Common myeloid progenitor, CD34-positive (primary cell): ENCODE measurements at regions of chr4 and their contacts with region 1.

Region 1: DNA sequence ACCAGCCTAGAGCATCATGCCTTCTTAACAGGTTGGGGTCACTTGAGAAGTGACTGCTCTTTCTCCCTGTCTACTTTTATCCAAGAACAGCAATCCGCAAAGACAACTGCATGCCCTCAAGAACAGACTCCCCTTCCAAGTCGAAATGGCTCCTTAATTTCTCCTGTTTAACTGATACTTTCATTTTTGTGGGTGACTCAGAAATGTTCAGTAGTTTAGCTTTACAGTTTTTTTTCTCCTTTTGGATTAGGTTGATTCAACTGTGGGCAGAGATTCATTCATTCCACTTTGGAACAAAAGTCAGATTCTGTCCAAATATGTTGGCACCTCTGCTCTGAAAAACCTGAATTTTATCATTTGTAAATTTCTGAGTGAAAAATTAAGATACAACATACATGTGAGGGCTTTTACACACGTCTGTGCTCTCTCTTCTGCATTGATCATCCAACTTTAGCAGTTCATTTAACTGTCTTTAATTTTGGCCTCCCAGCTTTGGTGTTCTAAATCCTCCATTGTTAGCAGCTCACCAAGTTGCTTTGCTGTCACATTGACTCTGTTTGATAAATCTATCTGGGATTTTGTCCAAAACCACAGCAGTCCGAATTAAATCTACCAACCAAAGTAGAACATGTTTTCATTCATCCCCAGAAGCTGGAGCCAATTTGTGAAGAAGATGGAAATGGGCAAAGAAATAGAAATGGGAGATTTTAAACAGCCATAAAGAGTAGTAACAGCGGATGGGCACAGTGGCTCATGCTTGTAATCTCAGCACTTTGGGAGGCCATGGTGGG is 50.0 kb downstream of the HOPX start:
- DNase-seq: no peak
- H3K4me3 ChIP-seq: no peak overlapping the region
- H3K27ac ChIP-seq: no peak overlapping the region
- H3K4me1 ChIP-seq: peaks cover 0 to 14% (median 1%) of the 10 kb centered on the region in 4 experiments
- H3K27me3 ChIP-seq: no peaks in the 10 kb centered on the region

Region 2: DNA sequence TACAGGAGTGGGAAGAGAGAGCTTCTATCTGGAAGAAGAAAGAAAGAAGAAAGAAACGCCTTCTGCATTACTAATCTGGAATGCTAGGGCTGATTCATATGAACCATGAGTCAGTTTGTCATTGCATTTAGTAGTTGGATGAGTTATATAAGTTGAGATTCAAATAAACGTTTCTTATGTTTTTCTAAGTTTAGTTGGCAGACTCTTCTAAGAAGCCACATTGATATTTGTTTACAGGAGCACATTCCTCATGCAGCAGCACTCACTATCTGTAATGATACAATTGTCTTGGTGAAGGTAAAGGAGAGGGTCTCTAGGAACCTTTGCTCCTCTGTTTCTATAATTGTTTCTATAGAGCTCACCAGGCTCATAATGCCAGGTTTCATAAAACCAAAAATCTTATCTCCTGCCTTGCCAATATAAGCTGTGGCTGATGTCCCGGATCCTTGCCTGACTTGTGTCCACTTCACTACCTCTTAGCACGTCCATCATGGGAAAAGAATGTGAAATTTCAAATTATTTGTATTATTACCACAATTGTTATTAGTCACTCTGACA is 10.5 kb after region 1 on chr4:
- CTCF ChIA-PET with region 1: interaction called, 10 read pairs
- POLR2A ChIA-PET with region 1: no interaction called
- DNase-seq: no peak
- H3K4me3 ChIP-seq: no peak overlapping the region
- H3K27ac ChIP-seq: no peak overlapping the region
- H3K4me1 ChIP-seq: no peaks in the 10 kb centered on the region
- H3K27me3 ChIP-seq: no peaks in the 10 kb centered on the region

Region 3: GRCh38 chr4:56662782-56663468 is 31.9 kb after region 1 on chr4:
- CTCF ChIA-PET with region 1: no interaction called
- POLR2A ChIA-PET with region 1: no interaction called
- DNase-seq: no peak
- H3K4me3 ChIP-seq: no peak overlapping the region
- H3K27ac ChIP-seq: no peak overlapping the region
- H3K4me1 ChIP-seq: peaks cover 3 to 40% (median 21%) of the 10 kb centered on the region in 4 experiments
- H3K27me3 ChIP-seq: no peaks in the 10 kb centered on the region